HEK293 (cell line): ENCODE measurements at regions of chr10 and their contacts with region 1.

Region 1: DNA sequence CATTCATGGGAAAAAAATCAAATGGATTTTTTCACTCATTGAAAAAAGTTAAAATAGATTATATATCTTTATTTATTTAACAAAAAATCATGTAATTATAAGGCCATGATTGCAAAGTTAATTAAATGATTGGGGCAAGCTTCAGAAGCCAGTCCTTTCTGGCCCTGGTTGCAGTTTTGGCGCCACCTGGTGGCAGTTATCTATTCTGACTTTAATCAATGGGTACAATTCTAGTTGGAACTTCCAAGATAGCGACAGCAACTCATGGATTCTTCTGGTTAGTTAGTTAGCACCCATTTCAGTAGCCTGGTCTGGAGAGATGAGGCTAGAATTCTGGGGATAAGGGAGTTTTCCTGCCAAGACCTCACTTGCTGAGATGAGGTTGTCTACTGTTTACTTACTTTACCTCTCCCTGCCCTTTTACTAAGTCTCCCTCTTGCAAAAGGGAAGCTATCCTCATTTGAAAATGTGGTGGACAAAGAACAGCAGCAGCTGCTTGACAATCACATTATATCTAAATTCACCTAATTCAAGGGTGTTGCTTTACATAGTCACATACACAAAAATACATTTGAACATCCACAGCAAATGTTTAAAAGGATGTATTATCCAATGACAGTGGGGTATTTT is 42.3 kb downstream of the NOC3L start:
- H3K4me3 ChIP-seq: no peak overlapping the region
- H3K27ac ChIP-seq: no peak overlapping the region
- H3K4me1 ChIP-seq: no peaks in the 10 kb centered on the region
- CTCF ChIP-seq: peak; percentile 58

Region 2: GRCh38 chr10:93816123-93816747 is 504.2 kb before region 1 on chr10:
- CTCF ChIA-PET with region 1: interaction called, 16 read pairs
- POLR2A ChIA-PET with region 1: no interaction called
- H3K4me3 ChIP-seq: no peak overlapping the region
- H3K27ac ChIP-seq: no peak overlapping the region
- H3K4me1 ChIP-seq: peaks cover 2% of the 10 kb centered on the region; the same call in 1 of the 2 replicates
- CTCF ChIP-seq: peak; percentile 59; the same call in 1 of the 2 replicates

Region 3: GRCh38 chr10:94076321-94076841 is 244.0 kb before region 1 on chr10:
- CTCF ChIA-PET with region 1: interaction called, 10 read pairs
- POLR2A ChIA-PET with region 1: no interaction called
- H3K4me3 ChIP-seq: no peak overlapping the region
- H3K27ac ChIP-seq: no peak overlapping the region
- H3K4me1 ChIP-seq: 0 out of 2 replicates have a peak, but pooled peaks cover 5% of the 10 kb centered on the region
- CTCF ChIP-seq: 0 out of 2 replicates have a peak, but pooled peaks have one; percentile 14

Region 4: GRCh38 chr10:94288361-94289108 is 31.9 kb before region 1 on chr10:
- CTCF ChIA-PET with region 1: interaction called, 12 read pairs
- POLR2A ChIA-PET with region 1: no interaction called
- H3K4me3 ChIP-seq: no peak overlapping the region
- H3K27ac ChIP-seq: no peak overlapping the region
- H3K4me1 ChIP-seq: no peaks in the 10 kb centered on the region
- CTCF ChIP-seq: no peak

Region 5: GRCh38 chr10:94334857-94335256 is 14.5 kb after region 1 on chr10:
- CTCF ChIA-PET with region 1: interaction called, 37 read pairs
- POLR2A ChIA-PET with region 1: interaction called, 4 read pairs
- H3K4me3 ChIP-seq: no peak overlapping the region
- H3K27ac ChIP-seq: no peak overlapping the region
- H3K4me1 ChIP-seq: no peaks in the 10 kb centered on the region
- CTCF ChIP-seq: no peak